ENCODE measurements at regions of chr13 and their contacts with region 1.

Region 1: DNA sequence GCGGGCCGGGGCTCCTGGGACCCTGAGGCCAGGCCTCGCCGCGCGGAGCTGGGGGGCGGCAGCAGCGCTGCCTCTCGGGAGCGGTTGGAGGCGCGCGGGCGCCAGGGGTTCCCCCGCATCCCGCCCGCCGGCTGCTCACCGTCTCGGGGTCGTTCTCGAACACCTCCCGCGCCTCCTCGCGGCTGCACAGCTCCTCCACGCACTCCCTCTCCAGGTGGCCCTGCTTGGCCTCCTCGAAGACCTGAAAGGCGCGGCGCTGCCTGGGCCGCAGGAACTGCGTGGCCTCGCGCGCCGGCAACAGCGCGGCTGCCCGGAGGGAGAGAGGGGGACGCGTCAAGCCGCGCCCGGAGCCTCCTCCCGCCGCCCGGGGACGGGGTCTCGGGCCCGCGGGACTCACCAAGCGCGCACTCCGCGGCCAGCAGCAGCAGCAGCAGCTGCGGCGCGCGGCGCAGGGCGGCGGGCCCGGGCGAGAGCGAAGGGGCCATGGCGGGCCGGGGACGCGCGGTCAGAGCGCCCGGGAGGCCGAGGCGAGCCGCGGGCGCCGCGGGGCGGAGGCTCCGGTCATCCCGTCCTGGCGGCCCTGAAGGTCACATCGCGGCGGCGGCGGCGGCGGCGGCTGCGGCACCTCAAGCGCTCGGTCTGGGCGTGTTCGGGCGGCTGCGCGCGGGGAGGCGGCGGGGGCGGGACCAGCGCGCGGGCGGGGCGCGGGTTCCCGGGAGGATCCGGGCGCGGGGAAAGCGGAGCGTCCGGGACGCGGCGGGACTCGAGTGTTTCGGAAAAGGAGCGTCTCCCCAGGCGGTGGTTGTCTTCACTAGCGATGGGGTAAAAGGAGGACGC is at the start of gene GAS6:
- DNase-seq: no peak
- ATAC-seq: peak; percentile 76
- total RNA-seq, gene GAS6: 189 TPM

Region 2: GRCh38 chr13:113584205-113584869 is 279.3 kb before region 1 on chr13 and contains the start of gene TFDP1:
- intact Hi-C with region 1: no loop called
- DNase-seq: peak; percentile 87
- ATAC-seq: peak; percentile 93
- total RNA-seq, gene TFDP1: 46.7 TPM

Region 3: GRCh38 chr13:113837554-113838355 is 25.9 kb before region 1 on chr13:
- intact Hi-C with region 1: loop called (anchors 2 kb)
- DNase-seq: peak; percentile 96
- ATAC-seq: peak; percentile 96

Region 4: GRCh38 chr13:113881614-113882266 is 18.1 kb after region 1 on chr13:
- intact Hi-C with region 1: loop called (anchors 1 kb)
- DNase-seq: no peak
- ATAC-seq: peak; percentile 69

Region 5: DNA sequence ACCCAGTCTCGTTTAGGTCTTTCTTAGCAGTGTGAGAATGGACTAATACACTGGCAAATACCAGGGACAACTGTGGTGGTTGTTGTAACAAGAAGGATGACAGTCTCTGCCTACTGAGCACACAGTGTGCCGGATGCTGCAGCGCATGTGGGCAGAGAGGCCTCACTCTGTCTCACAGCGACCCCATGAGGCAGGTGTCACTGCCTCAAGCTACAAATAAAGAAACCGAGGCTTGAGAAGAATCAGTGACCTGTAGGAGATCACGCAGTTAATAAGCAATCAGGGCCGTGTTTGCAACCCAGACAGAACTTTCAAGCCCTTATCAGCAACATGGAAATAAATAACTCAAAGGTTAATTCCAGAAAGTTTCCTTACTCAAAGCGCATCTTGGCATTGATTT is 40.8 kb after region 1 on chr13:
- intact Hi-C with region 1: loop called (anchors 5 kb)
- DNase-seq: no peak
- ATAC-seq: peak; percentile 90

Region 6: DNA sequence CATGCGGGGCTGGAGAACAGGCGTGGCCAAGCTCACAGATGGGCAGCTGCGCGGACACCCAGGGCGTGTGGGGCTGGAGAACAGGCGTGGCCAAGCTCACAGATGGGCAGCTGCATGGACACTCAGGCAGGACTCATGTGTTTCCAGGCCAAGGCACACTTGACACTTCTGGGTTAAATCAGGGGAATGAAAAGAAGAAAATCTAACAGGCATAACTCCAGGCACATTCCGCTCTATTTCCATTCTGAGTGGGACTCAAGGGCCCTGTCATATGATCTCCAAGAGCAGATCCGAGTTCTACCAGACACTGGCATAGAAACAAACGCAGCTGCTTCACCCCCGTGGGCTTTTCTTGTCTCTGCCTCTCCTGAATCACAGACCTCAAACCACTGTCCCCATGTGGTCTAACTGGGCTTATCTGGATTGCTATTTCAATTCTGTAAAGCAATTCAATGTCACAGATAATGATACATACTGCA is 127.6 kb after region 1 on chr13:
- intact Hi-C with region 1: no loop called
- DNase-seq: no peak
- ATAC-seq: peak; percentile 73